IMR-90 (cell line): ENCODE measurements at regions of chr10 and their contacts with region 1.

Region 1: GRCh38 chr10:21278491-21279239 is 246.8 kb downstream of the SKIDA1 start:
- DNase-seq: peak; percentile 90
- ATAC-seq: peak; percentile 99
- H3K4me3 ChIP-seq: no peak overlapping the region
- H3K27ac ChIP-seq: no peak overlapping the region
- H3K4me1 ChIP-seq: peaks cover 2% of the 10 kb centered on the region; the same call in 1 of the 2 replicates
- H3K27me3 ChIP-seq: no peaks in the 10 kb centered on the region; the same call in 1 of the 2 replicates
- CTCF ChIP-seq: peak; percentile 89
- POLR2A ChIP-seq: no peak
- RAD21 ChIP-seq: peak; percentile 97

Region 2: GRCh38 chr10:21160116-21160515 is 118.5 kb before region 1 on chr10:
- CTCF ChIA-PET with region 1: no interaction called
- POLR2A ChIA-PET with region 1: no interaction called
- dilution Hi-C with region 1: no loop called
- in situ Hi-C with region 1: no loop called
- intact Hi-C with region 1: no loop called
- DNase-seq: no peak
- ATAC-seq: no peak
- H3K4me3 ChIP-seq: no peak overlapping the region
- H3K27ac ChIP-seq: no peak overlapping the region
- H3K4me1 ChIP-seq: no peaks in the 10 kb centered on the region
- H3K27me3 ChIP-seq: no peaks in the 10 kb centered on the region
- CTCF ChIP-seq: no peak
- POLR2A ChIP-seq: no peak
- RAD21 ChIP-seq: no peak

Region 3: GRCh38 chr10:21336476-21337170 is 58.0 kb after region 1 on chr10:
- CTCF ChIA-PET with region 1: interaction called, 7 read pairs
- POLR2A ChIA-PET with region 1: no interaction called
- dilution Hi-C with region 1: no loop called
- in situ Hi-C with region 1: no loop called
- intact Hi-C with region 1: loop called (anchors 1 kb)
- DNase-seq: peak; percentile 97
- ATAC-seq: peak; percentile 77
- H3K4me3 ChIP-seq: no peak overlapping the region
- H3K27ac ChIP-seq: peak overlapping the region; percentile 77
- H3K4me1 ChIP-seq: peaks cover 9% of the 10 kb centered on the region
- H3K27me3 ChIP-seq: no peaks in the 10 kb centered on the region
- CTCF ChIP-seq: no peak
- POLR2A ChIP-seq: no peak
- RAD21 ChIP-seq: peak; percentile 19; the same call in 1 of the 2 replicates

Region 4: DNA sequence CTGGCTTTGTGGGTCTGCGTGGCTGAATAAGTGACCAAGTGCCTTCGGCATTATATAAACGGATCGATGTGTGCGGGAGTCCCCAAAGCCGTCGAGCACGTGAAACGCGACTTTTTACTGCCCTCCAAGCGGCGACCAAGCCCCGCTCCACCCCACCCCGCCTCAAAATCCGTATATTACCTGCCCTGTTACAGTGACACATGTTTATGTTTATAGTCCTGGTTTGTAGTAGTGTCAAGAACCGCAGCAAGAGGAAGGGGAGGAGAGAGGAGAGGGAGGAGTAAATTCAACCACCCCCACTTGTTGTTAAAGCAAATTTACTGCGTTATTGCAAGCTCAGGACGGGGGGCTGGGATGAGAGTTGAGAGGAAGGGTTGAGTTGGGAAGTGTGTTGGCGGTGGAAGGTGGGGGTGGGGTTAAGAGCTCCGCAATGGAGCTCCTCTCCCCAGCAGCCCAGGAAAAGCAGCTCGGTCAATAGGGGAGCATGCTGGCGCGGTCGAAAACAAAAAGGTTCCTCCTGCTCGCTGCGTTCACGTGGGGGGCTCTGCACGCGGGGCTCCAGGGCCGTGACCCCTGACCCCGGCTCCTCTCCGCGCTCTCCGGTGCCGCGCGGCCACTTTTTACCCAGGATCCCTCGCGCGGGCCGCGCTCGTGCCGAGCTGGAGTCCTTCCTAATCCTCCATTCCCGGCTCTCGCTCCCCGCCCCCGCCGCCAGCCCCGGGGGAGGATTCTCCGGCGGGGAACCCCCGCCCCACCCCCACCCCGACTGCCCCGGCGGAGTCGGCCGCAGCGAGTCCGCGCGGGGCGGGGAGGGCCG is 246.9 kb after region 1 on chr10 and contains the start of gene SKIDA1:
- CTCF ChIA-PET with region 1: no interaction called
- POLR2A ChIA-PET with region 1: no interaction called
- dilution Hi-C with region 1: no loop called
- in situ Hi-C with region 1: no loop called
- intact Hi-C with region 1: loop called (anchors 2 kb)
- DNase-seq: peak; percentile 86
- ATAC-seq: peak; percentile 73
- H3K4me3 ChIP-seq: peak within 1 kb of the TSS; percentile 62
- H3K27ac ChIP-seq: peak within 1 kb of the TSS; percentile 98
- H3K4me1 ChIP-seq: peaks cover 3% of the 10 kb centered on the region; the same call in 1 of the 2 replicates
- H3K27me3 ChIP-seq: no peaks in the 10 kb centered on the region
- CTCF ChIP-seq: no peak
- POLR2A ChIP-seq: no peak
- RAD21 ChIP-seq: no peak
- total RNA-seq, gene SKIDA1: 0.56 and 0.72 TPM in 2 replicates

Region 5: DNA sequence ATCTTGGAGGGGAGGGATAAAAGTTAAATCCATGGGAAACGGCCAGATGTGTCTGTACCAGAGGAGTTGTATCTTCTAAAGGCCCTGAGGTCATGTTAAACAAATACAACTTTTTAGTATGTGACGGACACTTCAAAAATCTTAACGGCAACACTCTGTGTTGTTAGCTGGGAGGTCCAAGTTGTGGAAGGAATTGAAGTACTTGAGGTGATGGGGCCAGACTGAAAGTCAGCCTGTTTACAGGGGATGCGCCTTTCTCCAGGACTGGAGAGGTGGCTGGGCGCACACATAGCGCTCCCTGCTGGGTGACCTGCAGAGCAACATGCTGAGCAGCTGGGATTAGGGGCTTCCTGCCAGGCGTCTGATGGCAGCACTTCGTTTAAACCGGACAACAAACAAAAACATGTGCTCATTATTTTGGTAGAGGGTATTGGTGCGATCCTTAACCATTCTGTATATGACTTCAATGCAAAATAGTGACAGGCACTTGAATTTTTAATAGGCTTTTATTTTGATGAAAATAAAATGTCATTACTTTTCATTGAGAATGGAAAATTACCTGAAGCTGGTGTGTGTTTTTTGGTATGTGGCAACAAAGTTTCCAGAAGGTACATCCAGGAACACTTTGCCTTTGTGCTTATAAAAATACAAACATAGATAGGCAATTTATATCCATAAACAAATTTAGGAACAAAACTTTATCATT is 453.6 kb after region 1 on chr10:
- CTCF ChIA-PET with region 1: no interaction called
- POLR2A ChIA-PET with region 1: no interaction called
- dilution Hi-C with region 1: no loop called
- in situ Hi-C with region 1: loop called (anchors 5 kb)
- intact Hi-C with region 1: loop called (anchors 2 kb)
- DNase-seq: peak; percentile 82
- ATAC-seq: peak; percentile 95
- H3K4me3 ChIP-seq: no peak overlapping the region
- H3K27ac ChIP-seq: no peak overlapping the region
- H3K4me1 ChIP-seq: peaks cover 4% of the 10 kb centered on the region
- H3K27me3 ChIP-seq: no peaks in the 10 kb centered on the region
- CTCF ChIP-seq: peak; percentile 93
- POLR2A ChIP-seq: no peak
- RAD21 ChIP-seq: peak; percentile 93

Region 6: GRCh38 chr10:22244001-22244400 is 965.3 kb after region 1 on chr10:
- CTCF ChIA-PET with region 1: no interaction called
- POLR2A ChIA-PET with region 1: interaction called, 22 read pairs
- dilution Hi-C with region 1: no loop called
- in situ Hi-C with region 1: no loop called
- intact Hi-C with region 1: no loop called
- DNase-seq: no peak
- ATAC-seq: no peak
- H3K4me3 ChIP-seq: no peak overlapping the region
- H3K27ac ChIP-seq: no peak overlapping the region
- H3K4me1 ChIP-seq: no peaks in the 10 kb centered on the region
- H3K27me3 ChIP-seq: no peaks in the 10 kb centered on the region; the same call in 1 of the 2 replicates
- CTCF ChIP-seq: no peak
- POLR2A ChIP-seq: no peak
- RAD21 ChIP-seq: no peak